ENCODE measurements at regions of chr1 and their contacts with region 1.

Region 1: GRCh38 chr1:53959664-53960250 is 13.6 kb downstream of the LRRC42 start:
- DNase-seq: peak; percentile 64
- ATAC-seq: peak; percentile 64
- H3K4me3 ChIP-seq: no peak overlapping the region
- H3K4me3 Mint-ChIP-seq: no peak overlapping the region
- H3K27ac ChIP-seq: no peak overlapping the region
- H3K27ac Mint-ChIP-seq: no peak overlapping the region
- H3K4me1 ChIP-seq: peaks cover 0 to 6% of the 10 kb centered on the region in 2 donors
- H3K4me1 Mint-ChIP-seq: no peaks in the 10 kb centered on the region
- H3K27me3 ChIP-seq: no peaks in the 10 kb centered on the region
- H3K27me3 Mint-ChIP-seq: no peaks in the 10 kb centered on the region
- CTCF ChIP-seq: peak; percentile 81

Region 2: GRCh38 chr1:53826367-53826766 is 133.4 kb before region 1 on chr1:
- CTCF ChIA-PET with region 1: interaction called, 10 read pairs
- POLR2A ChIA-PET with region 1: no interaction called
- intact Hi-C with region 1: no loop called
- DNase-seq: no peak
- ATAC-seq: no peak
- H3K4me3 ChIP-seq: no peak overlapping the region
- H3K4me3 Mint-ChIP-seq: no peak overlapping the region
- H3K27ac ChIP-seq: no peak overlapping the region
- H3K27ac Mint-ChIP-seq: no peak overlapping the region
- H3K4me1 ChIP-seq: no peaks in the 10 kb centered on the region
- H3K4me1 Mint-ChIP-seq: no peaks in the 10 kb centered on the region
- H3K27me3 ChIP-seq: no peaks in the 10 kb centered on the region
- H3K27me3 Mint-ChIP-seq: no peaks in the 10 kb centered on the region
- CTCF ChIP-seq: no peak

Region 3: GRCh38 chr1:53869454-53870117 is 90.2 kb before region 1 on chr1:
- CTCF ChIA-PET with region 1: interaction called, 180 read pairs
- POLR2A ChIA-PET with region 1: interaction called, 8 read pairs
- intact Hi-C with region 1: no loop called
- DNase-seq: peak; percentile 55
- ATAC-seq: peak; percentile 85
- H3K4me3 ChIP-seq: no peak overlapping the region
- H3K4me3 Mint-ChIP-seq: peak overlapping the region; percentile 5
- H3K27ac ChIP-seq: peak overlapping the region in 1 of 2 donors; percentile 51
- H3K27ac Mint-ChIP-seq: peak overlapping the region; percentile 72
- H3K4me1 ChIP-seq: peaks cover 6 to 7% of the 10 kb centered on the region in 2 donors
- H3K4me1 Mint-ChIP-seq: peaks cover 5% of the 10 kb centered on the region
- H3K27me3 ChIP-seq: no peaks in the 10 kb centered on the region
- H3K27me3 Mint-ChIP-seq: no peaks in the 10 kb centered on the region
- CTCF ChIP-seq: no peak

Region 4: GRCh38 chr1:53889304-53890298 is 70.2 kb before region 1 on chr1 and contains the start of gene YIPF1:
- CTCF ChIA-PET with region 1: interaction called, 11 read pairs
- POLR2A ChIA-PET with region 1: no interaction called
- intact Hi-C with region 1: no loop called
- DNase-seq: peak; percentile 87
- ATAC-seq: peak; percentile 99
- H3K4me3 ChIP-seq: peak within 1 kb of the TSS; percentile 76 to 95 (median 83)
- H3K4me3 Mint-ChIP-seq: peak within 1 kb of the TSS; percentile 96
- H3K27ac ChIP-seq: peak within 1 kb of the TSS; percentile 14 to 71
- H3K27ac Mint-ChIP-seq: peak within 1 kb of the TSS; percentile 79
- H3K4me1 ChIP-seq: peaks cover 19 to 27% of the 10 kb centered on the region in 2 donors
- H3K4me1 Mint-ChIP-seq: peaks cover 44% of the 10 kb centered on the region
- H3K27me3 ChIP-seq: no peaks in the 10 kb centered on the region
- H3K27me3 Mint-ChIP-seq: peaks cover 1% of the 10 kb centered on the region
- CTCF ChIP-seq: no peak
- total RNA-seq, gene YIPF1: 13.9 and 19.3 TPM in 2 replicates

Region 5: GRCh38 chr1:54047384-54048305 is 87.9 kb after region 1 on chr1:
- CTCF ChIA-PET with region 1: interaction called, 11 read pairs
- POLR2A ChIA-PET with region 1: no interaction called
- intact Hi-C with region 1: no loop called
- DNase-seq: peak; percentile 19
- ATAC-seq: peak; percentile 43
- H3K4me3 ChIP-seq: no peak overlapping the region
- H3K4me3 Mint-ChIP-seq: peak overlapping the region; percentile 30
- H3K27ac ChIP-seq: peak overlapping the region; percentile 51 to 67
- H3K27ac Mint-ChIP-seq: peak overlapping the region; percentile 62
- H3K4me1 ChIP-seq: peaks cover 32 to 37% of the 10 kb centered on the region in 2 donors
- H3K4me1 Mint-ChIP-seq: peaks cover 35% of the 10 kb centered on the region
- H3K27me3 ChIP-seq: no peaks in the 10 kb centered on the region
- H3K27me3 Mint-ChIP-seq: no peaks in the 10 kb centered on the region
- CTCF ChIP-seq: no peak